Esophagus muscularis mucosa (tissue), 4 donors: ENCODE measurements at regions of chr9 and their contacts with region 1.

Region 1: GRCh38 chr9:37920471-37921167 is 16.7 kb upstream of the SLC25A51 start:
- DNase-seq: no peak
- H3K4me3 ChIP-seq: no peak overlapping the region
- H3K27ac ChIP-seq: no peak overlapping the region
- H3K4me1 ChIP-seq: peaks cover 20 to 36% (median 25%) of the 10 kb centered on the region in 4 donors
- H3K27me3 ChIP-seq: no peaks in the 10 kb centered on the region
- CTCF ChIP-seq: no peak
- EP300 ChIP-seq: no peak
- POLR2A ChIP-seq: no peak

Region 2: GRCh38 chr9:37994639-37995347 is 74.2 kb after region 1 on chr9:
- intact Hi-C with region 1: loop called (anchors 10 kb)
- DNase-seq: peak; percentile 94
- H3K4me3 ChIP-seq: peak overlapping the region; percentile 20 to 34 (median 27)
- H3K27ac ChIP-seq: peak overlapping the region; percentile 70 to 76 (median 72)
- H3K4me1 ChIP-seq: peaks cover 55 to 66% (median 62%) of the 10 kb centered on the region in 4 donors
- H3K27me3 ChIP-seq: no peaks in the 10 kb centered on the region
- CTCF ChIP-seq: no peak
- EP300 ChIP-seq: no peak
- POLR2A ChIP-seq: no peak